ENCODE measurements at regions of chr13 and their contacts with region 1.

Region 1: GRCh38 chr13:112942689-112943308 is 26.2 kb upstream of the MCF2L start:
- DNase-seq: peak; percentile 92 to 97 (median 96)
- H3K4me3 ChIP-seq: peak overlapping the region; percentile 42
- H3K27ac ChIP-seq: no peak overlapping the region
- H3K4me1 ChIP-seq: peaks cover 5% of the 10 kb centered on the region
- H3K27me3 ChIP-seq: no peaks in the 10 kb centered on the region
- CTCF ChIP-seq: peak; percentile 73 to 92 (median 78)
- EP300 ChIP-seq: no peak
- POLR2A ChIP-seq: no peak

Region 2: GRCh38 chr13:112931028-112931934 is 11.5 kb before region 1 on chr13:
- intact Hi-C with region 1: no loop called
- DNase-seq: peak in 1 of 5 donors; percentile 16
- H3K4me3 ChIP-seq: no peak overlapping the region
- H3K27ac ChIP-seq: no peak overlapping the region
- H3K4me1 ChIP-seq: no peaks in the 10 kb centered on the region
- H3K27me3 ChIP-seq: no peaks in the 10 kb centered on the region
- CTCF ChIP-seq: no peak
- EP300 ChIP-seq: no peak
- POLR2A ChIP-seq: no peak

Region 3: GRCh38 chr13:112968908-112969691 is 26.3 kb after region 1 on chr13 and contains the start of gene MCF2L:
- intact Hi-C with region 1: no loop called
- DNase-seq: peak; percentile 56 to 84 (median 73)
- H3K4me3 ChIP-seq: peak within 1 kb of the TSS; percentile 46
- H3K27ac ChIP-seq: peak within 1 kb of the TSS in 1 of 2 donors; percentile 15
- H3K4me1 ChIP-seq: peaks cover 3% of the 10 kb centered on the region
- H3K27me3 ChIP-seq: no peaks in the 10 kb centered on the region
- CTCF ChIP-seq: peak in 2 of 3 donors; percentile 24 to 32
- EP300 ChIP-seq: no peak
- POLR2A ChIP-seq: no peak
- total RNA-seq, gene MCF2L: 6.7 to 22.2 (median 8.7) TPM

Region 4: DNA sequence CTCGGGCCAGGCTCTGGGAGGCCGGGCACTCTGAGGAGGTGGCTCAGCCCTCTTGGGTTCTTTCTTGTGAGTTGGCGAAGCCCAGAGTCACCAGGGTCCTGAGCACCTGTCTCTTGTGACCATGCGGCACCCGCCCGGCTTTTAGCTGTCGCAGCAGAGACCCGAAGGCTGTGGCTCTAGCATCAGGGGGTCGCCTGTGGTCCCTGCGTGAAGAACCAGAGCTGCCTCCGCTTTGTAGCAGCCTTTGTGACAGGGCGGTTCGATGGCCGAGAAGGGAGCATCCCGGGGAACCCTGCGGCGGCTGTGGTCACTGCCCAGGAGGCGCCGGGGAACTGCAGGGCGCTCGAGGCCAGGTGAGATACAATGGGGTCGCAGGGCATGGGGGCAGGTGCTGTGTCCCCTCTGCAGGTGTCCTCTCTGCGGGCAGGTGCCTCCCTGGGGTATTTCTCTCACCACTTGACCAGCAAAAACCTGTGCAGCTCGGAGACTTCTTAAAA is 36.7 kb after region 1 on chr13:
- intact Hi-C with region 1: no loop called
- DNase-seq: no peak
- H3K4me3 ChIP-seq: peak overlapping the region; percentile 20
- H3K27ac ChIP-seq: no peak overlapping the region
- H3K4me1 ChIP-seq: no peaks in the 10 kb centered on the region
- H3K27me3 ChIP-seq: no peaks in the 10 kb centered on the region
- CTCF ChIP-seq: no peak
- EP300 ChIP-seq: no peak
- POLR2A ChIP-seq: no peak

Region 5: DNA sequence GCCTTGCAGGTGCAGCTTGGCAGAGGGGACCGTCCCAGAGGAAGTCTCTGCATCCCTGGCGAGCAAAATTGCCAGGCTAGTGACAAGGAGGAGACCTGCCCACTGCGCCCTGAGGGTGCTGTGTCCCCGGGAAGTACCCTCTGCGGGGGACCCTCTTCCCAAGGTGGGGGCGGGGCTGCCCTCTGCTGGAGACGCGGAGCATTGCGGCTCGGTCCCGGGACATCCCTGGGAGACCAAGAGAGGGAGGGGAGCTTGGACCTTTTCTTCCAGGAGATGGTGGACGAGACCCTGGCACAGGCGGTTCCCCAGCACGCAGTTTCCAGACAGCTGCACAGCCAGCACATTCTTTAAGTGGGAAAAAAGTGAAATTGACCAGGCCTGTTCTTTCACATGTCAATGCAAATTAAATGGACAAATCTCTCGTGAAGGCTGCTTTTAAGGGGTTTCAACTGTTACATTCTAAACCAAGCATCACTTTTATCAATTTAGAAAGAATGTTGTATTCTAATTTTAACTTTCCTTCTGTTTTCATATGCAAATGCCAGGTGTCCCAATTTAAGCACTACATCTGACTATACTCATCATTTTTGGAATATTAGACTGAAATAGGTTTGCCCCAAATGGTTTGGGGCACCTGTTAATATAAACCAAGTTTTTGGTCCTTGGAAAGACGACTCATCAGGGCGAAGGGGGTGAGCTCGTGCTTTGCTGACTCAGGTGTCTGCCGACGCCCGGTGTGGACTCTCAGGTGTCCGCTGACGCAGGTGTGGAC is 86.9 kb after region 1 on chr13:
- intact Hi-C with region 1: loop called in 2 of 4 experiments (anchors 5 kb)
- DNase-seq: peak in 4 of 5 donors; percentile 40 to 73 (median 64)
- H3K4me3 ChIP-seq: no peak overlapping the region
- H3K27ac ChIP-seq: no peak overlapping the region
- H3K4me1 ChIP-seq: no peaks in the 10 kb centered on the region
- H3K27me3 ChIP-seq: no peaks in the 10 kb centered on the region
- CTCF ChIP-seq: peak; percentile 45 to 66 (median 59)
- EP300 ChIP-seq: no peak
- POLR2A ChIP-seq: no peak

Region 6: DNA sequence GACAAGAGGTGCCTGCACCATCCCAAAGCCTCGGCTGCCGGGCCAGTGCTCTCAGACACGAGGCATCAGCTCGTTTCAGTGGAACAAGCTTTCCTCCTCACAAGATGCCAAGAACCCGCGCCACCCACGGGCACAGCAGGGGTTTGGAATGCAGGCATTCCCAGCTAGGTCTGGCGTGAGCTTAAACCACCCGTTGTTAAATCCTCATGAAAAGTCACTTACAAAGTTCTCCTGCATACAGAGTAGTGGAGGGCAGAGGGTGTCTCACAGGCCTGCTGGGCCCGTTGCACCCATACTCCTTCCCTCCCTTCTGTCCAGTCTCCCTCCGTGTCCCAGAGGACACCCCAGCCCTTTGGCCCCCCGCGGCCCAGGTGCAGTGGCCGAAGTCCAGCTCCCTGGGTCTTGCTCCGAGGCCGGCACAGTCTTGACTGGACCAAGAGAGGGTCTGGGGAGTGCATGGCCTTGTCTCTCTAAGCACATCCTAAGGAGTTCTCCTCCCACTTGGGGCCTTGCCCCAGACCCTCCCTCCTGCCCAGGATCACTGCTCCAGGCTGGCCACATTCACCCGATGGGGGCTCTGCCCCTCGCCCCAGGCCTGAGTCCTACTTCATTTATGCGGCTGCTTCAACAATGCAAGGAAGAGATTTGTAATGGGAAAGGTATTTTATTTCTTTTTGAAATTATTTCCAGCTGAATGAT is 456.3 kb after region 1 on chr13:
- intact Hi-C with region 1: loop called in 3 of 4 experiments (anchors 5 to 10 kb)
- DNase-seq: peak in 1 of 5 donors; percentile 4
- H3K4me3 ChIP-seq: no peak overlapping the region
- H3K27ac ChIP-seq: no peak overlapping the region
- H3K4me1 ChIP-seq: peaks cover under 1% of the 10 kb centered on the region
- H3K27me3 ChIP-seq: no peaks in the 10 kb centered on the region
- CTCF ChIP-seq: no peak
- EP300 ChIP-seq: no peak
- POLR2A ChIP-seq: no peak

Measured in ovary (tissue), 10 donors.